ENCODE measurements at regions of chr19 and their contacts with region 1.

Region 1: GRCh38 chr19:41353466-41354342 is at the start of gene TGFB1:
- DNase-seq: peak; percentile 98
- H3K4me3 Mint-ChIP-seq: peak within 1 kb of the TSS; percentile 92
- H3K27ac Mint-ChIP-seq: peak within 1 kb of the TSS; percentile 96
- H3K4me1 Mint-ChIP-seq: peaks cover 56% of the 10 kb centered on the region
- H3K27me3 Mint-ChIP-seq: no peaks in the 10 kb centered on the region
- total RNA-seq, gene TGFB1: 125 and 127 TPM in 2 replicates

Region 2: DNA sequence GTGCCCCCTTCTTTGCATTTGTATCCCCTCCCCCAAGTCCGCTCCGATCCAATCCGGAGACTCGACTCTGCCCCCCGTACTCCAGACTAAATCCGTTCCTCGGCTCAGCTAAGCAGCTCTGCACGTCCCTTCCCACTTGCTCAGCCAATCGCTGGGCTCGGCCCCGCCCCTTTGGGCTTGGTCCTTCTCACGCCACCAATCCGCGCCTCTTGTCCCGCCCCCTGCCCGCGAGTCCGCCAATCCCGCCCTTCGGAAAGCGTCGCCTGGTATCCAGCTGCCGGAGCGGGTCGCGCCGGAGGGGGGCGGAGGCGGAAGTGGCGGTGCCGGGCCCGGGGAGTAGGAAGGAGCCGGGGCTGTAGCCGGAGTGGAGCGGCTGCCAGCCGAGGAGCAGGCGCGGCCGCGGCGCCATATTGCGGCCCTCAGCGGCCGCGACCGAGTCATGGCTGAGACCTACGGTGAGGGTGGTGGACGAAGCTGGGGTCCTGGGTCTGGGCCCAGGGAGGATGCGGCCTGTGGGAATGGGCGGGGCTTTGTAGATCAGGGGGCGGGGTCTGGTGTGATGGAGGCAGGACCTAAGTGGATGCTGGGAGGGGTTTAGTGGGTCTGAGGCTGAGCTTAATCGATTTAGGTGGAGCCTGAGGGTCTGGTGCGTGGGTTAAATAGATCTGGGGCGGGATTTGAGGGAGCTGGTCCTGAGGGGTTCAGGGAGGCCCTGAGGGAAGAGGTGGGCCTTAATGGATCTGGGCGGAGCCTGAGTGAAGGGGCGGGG is 575.6 kb before region 1 on chr19 and contains the start of gene RAB4B:
- intact Hi-C with region 1: loop called (anchors 10 kb)
- DNase-seq: peak; percentile 100
- H3K4me3 Mint-ChIP-seq: peak within 1 kb of the TSS; percentile 94
- H3K27ac Mint-ChIP-seq: peak within 1 kb of the TSS; percentile 96
- H3K4me1 Mint-ChIP-seq: peaks cover 53% of the 10 kb centered on the region
- H3K27me3 Mint-ChIP-seq: no peaks in the 10 kb centered on the region
- total RNA-seq, gene RAB4B: 36.3 and 41.0 TPM in 2 replicates

Region 3: GRCh38 chr19:41310033-41310758 is 43.5 kb before region 1 on chr19 and contains the start of gene CCDC97:
- intact Hi-C with region 1: loop called (anchors 2 kb)
- DNase-seq: peak; percentile 97
- H3K4me3 Mint-ChIP-seq: peak within 1 kb of the TSS; percentile 99
- H3K27ac Mint-ChIP-seq: peak within 1 kb of the TSS; percentile 98
- H3K4me1 Mint-ChIP-seq: peaks cover 60% of the 10 kb centered on the region
- H3K27me3 Mint-ChIP-seq: no peaks in the 10 kb centered on the region
- total RNA-seq, gene CCDC97: 30.4 and 30.7 TPM in 2 replicates

Region 4: GRCh38 chr19:41327576-41328156 is 26.0 kb before region 1 on chr19:
- intact Hi-C with region 1: loop called (anchors 1 kb)
- DNase-seq: peak; percentile 90
- H3K4me3 Mint-ChIP-seq: peak overlapping the region; percentile 91
- H3K27ac Mint-ChIP-seq: peak overlapping the region; percentile 98
- H3K4me1 Mint-ChIP-seq: peaks cover 64% of the 10 kb centered on the region
- H3K27me3 Mint-ChIP-seq: no peaks in the 10 kb centered on the region

Region 5: DNA sequence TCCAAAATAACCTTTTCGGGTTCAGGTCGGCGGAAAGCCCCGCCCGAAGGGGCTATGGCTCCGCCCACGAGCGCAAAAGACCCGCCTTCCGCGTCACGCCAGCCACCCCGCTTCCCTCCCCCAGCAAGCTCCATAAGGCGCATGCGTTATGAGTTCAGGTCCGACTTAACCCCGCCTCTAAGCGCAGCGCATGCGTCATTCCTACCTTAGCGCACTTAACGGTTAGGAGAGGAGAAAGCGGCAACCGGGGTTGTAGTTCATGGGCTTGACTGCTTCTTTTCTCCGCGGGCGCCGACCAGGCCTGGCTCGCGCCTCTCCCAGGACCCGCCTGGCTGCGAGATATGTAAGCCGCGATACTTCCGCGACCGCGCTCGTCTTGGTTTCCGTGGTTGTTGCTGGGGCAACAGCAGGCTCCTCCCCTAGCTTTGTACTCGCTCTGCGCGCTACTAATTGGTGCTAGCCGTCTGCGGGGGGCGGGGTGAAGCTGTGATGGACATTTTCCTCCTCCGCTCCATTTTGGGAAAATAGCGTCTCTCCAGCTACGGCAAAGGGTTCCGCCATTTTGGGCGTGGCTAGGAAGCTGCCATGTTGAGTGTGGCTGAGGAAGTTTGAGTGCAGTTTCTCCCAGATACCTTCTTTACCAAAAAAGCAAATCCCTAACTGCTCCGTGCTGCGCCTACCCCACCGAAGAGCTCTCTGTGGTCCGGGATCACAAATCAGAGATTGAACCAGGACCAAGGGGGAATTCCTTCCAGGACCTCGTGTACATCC is 10.2 kb after region 1 on chr19 and contains the start of gene B9D2:
- intact Hi-C with region 1: loop called (anchors 1 kb)
- DNase-seq: peak; percentile 99
- H3K4me3 Mint-ChIP-seq: peak within 1 kb of the TSS; percentile 93
- H3K27ac Mint-ChIP-seq: peak within 1 kb of the TSS; percentile 99
- H3K4me1 Mint-ChIP-seq: peaks cover 28% of the 10 kb centered on the region
- H3K27me3 Mint-ChIP-seq: no peaks in the 10 kb centered on the region
- total RNA-seq, gene B9D2: 6.3 and 8.6 TPM in 2 replicates

Region 6: GRCh38 chr19:41397086-41398049 is 43.7 kb after region 1 on chr19 and contains the starts of genes BCKDHA and EXOSC5:
- intact Hi-C with region 1: loop called (anchors 1 kb)
- DNase-seq: peak; percentile 100
- H3K4me3 Mint-ChIP-seq: peak within 1 kb of the TSS; percentile 99
- H3K27ac Mint-ChIP-seq: peak within 1 kb of the TSS; percentile 100
- H3K4me1 Mint-ChIP-seq: peaks cover 39% of the 10 kb centered on the region
- H3K27me3 Mint-ChIP-seq: no peaks in the 10 kb centered on the region
- total RNA-seq, gene BCKDHA: 11.4 and 20.1 TPM in 2 replicates
- total RNA-seq, gene EXOSC5: 65.8 and 69.2 TPM in 2 replicates

Region 7: DNA sequence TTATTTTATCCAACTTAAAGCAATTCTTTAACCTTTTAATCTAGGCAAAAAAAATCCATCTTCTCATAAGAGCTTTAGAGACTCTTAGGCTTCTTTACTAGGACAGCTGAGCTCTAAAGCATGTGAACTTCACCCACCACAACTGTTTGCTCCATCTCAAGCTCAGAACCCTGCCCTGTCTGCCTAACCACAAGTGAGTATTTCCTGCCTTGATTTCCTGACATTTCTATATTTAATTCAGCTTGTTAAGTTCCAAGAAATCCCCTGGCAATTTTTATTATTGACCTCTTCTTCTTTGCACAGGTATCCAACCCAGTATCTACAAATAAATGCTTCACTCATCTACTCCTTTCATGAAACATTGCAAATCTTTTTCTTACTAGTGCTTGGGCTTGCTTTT is 201.2 kb after region 1 on chr19:
- intact Hi-C with region 1: loop called (anchors 2 kb)
- DNase-seq: peak; percentile 86
- H3K4me3 Mint-ChIP-seq: peak overlapping the region; percentile 99
- H3K27ac Mint-ChIP-seq: peak overlapping the region; percentile 84
- H3K4me1 Mint-ChIP-seq: peaks cover 70% of the 10 kb centered on the region
- H3K27me3 Mint-ChIP-seq: no peaks in the 10 kb centered on the region

Measured in activated CD4-positive, alpha-beta T cell treated with anti-CD3 and anti-CD28 coated beads, Interleukin-2, amount 10 ng/mL, durations not matched to agents 24 days and 14 days (primary cell).